AG04449 (cell line): ENCODE measurements at regions of chr6 and their contacts with region 1.

Region 1: DNA sequence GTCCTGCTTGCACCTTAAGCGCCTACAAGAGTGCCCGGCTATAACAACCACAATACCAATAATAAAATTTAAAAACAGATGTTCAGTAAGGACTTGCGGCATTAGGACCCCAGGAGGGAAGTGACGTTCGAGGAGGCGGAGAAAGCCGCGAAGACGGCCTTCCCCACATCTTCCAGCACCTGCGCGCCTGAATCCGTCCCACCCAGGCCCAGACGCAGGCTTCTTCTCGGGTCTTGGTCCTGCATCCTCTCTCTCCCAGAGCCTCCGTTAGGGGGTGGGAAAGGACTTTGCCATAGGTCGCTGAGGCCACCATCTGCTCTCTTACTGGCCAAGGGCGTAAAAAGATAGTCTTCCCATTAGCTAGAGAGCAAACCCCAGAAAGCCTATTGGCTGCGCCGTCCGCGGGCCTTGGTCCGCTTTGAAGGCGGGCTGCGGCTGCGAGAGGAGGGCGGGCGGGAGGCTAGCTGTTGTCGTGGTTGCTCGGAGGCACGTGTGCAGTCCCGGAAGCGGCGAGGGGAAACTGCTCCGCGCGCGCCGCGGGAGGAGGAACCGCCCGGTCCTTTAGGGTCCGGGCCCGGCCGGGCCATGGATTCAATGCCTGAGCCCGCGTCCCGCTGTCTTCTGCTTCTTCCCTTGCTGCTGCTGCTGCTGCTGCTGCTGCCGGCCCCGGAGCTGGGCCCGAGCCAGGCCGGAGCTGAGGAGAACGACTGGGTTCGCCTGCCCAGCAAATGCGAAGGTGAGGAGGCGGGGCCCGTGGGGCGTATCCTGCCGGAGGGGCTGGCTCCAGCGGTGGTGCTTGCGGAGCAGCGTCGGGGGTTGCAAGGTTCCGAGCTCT is at the start of gene CNPY3:
- DNase-seq: peak; percentile 85
- H3K4me3 ChIP-seq: peak within 1 kb of the TSS; percentile 71
- CTCF ChIP-seq: no peak

Region 2: DNA sequence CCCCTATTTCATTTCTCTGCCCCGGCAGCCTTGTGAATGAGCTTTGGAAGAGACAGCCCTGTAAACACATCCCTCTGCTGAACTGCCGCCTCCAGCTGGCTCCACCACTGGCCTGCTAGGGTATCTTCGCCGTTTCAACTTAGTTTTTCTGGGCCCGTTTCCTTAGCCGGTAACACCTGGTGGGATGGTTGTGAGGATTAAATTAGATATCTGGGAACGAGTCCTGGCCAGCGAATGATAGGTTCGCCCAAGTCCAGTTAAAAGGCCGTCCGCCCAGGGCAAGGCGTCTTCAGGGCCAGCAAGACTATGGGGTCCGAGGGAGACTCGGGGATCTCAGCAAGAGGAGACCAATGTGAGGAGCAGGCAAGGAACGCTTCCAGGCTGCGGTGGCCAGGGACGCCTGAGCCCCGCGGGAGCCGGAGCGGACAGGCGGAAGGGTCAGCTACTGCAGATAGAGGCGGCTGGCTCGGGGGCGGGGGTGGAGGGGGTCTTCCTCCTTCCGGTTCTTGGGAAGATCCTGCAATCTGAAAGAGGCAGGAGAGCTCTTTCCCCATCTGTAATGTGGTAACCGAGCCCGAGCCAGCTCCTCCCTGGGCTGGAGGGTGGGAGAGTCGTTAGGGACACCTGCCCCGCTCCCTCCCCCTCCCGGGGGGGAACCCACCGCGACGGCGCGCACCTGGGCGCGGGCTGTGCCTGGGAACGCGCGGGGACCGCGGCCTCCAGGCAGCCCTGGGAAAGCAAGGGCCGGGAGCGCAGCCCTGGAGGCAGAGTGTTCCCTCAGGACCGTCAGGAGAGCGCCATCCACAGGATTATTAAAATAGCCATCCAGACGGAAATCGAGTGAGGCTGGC is 17.8 kb before region 1 on chr6:
- CTCF ChIA-PET with region 1: no interaction called
- POLR2A ChIA-PET with region 1: no interaction called
- DNase-seq: no peak
- H3K4me3 ChIP-seq: peak overlapping the region; percentile 15; the same call in 1 of the 2 replicates
- CTCF ChIP-seq: no peak

Region 3: DNA sequence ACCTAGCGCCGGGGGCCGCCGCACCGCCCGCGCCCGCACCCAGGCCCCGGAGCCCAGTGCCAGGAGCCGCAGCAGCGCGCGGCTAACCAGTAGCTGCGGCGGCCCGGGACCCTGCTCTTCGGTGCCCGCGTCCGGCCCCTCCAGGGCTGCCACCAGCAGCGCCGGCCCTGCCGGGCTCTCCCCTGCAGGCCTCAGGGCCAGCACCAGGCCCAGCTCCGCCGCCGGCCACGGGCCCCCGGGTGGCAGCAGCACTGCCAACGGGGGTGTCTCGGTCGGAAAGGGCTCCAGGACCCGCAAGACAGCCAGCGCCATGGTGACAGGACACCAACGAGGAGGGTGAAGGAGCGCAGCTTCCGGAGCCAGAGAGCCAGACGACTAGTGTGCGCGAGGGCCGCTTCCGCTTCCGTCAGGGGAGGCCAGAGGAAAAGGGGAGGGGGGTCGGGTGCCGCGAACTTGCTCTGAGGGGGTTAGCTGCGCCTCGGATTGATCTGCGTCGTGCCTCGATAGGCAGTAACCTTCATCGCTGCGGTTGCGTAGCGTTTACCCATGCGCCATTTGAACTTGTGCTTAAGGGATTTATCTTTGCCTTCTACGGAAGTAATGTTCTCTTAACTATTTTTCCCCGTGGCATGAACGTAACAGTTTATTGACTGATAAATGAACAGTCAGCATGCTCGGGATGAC is 49.8 kb after region 1 on chr6 and contains the start of gene PEX6:
- CTCF ChIA-PET with region 1: no interaction called
- POLR2A ChIA-PET with region 1: interaction called, 17 read pairs
- DNase-seq: peak; percentile 23
- H3K4me3 ChIP-seq: peak within 1 kb of the TSS; percentile 78
- CTCF ChIP-seq: no peak

Region 4: GRCh38 chr6:42984001-42984923 is 55.1 kb after region 1 on chr6 and contains the start of gene PPP2R5D:
- CTCF ChIA-PET with region 1: no interaction called
- POLR2A ChIA-PET with region 1: interaction called, 17 read pairs
- DNase-seq: peak; percentile 93
- H3K4me3 ChIP-seq: peak within 1 kb of the TSS; percentile 77
- CTCF ChIP-seq: no peak